Uterus (tissue), 4 donors: ENCODE measurements at regions of chr16 and their contacts with region 1.

Region 1: DNA sequence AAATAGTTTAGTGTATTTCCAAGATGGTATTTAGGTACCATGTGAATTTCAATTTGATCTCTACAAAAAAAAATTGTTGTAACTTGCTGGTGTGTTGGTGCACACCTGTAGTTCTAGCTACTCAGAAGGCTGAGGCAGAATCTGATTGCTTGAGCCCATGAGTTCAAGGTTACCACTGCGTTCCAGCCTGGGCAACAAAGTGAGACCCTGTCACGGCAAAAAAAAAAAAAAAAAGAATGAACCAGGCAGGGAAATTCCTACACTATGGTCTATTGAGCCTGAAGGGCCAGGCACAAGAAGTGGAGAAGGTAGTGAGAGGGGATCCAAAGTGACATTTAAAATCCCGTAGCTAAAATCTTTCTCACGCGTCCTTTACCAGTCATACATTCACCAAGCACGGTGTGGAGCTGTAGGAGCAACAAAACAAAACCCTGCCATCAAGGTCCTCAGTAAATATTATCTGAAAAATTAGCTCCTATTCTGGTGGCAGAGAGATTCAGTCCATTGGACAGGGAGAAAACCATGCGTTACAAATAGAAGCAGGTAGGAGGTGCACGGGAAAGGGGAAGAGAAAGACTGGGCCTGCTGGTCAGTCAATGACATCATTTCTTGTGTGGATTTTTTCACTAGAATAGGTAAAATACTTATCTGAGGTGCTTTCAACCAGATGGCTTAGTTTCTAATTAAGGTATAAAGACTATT is 27.3 kb downstream of the TXNDC11 start:
- DNase-seq: no peak
- H3K4me3 ChIP-seq: no peak overlapping the region
- H3K27ac ChIP-seq: peak overlapping the region in 1 of 2 donors; percentile 43
- H3K4me1 ChIP-seq: no peaks in the 10 kb centered on the region
- H3K27me3 ChIP-seq: no peaks in the 10 kb centered on the region
- CTCF ChIP-seq: no peak
- POLR2A ChIP-seq: no peak

Region 2: DNA sequence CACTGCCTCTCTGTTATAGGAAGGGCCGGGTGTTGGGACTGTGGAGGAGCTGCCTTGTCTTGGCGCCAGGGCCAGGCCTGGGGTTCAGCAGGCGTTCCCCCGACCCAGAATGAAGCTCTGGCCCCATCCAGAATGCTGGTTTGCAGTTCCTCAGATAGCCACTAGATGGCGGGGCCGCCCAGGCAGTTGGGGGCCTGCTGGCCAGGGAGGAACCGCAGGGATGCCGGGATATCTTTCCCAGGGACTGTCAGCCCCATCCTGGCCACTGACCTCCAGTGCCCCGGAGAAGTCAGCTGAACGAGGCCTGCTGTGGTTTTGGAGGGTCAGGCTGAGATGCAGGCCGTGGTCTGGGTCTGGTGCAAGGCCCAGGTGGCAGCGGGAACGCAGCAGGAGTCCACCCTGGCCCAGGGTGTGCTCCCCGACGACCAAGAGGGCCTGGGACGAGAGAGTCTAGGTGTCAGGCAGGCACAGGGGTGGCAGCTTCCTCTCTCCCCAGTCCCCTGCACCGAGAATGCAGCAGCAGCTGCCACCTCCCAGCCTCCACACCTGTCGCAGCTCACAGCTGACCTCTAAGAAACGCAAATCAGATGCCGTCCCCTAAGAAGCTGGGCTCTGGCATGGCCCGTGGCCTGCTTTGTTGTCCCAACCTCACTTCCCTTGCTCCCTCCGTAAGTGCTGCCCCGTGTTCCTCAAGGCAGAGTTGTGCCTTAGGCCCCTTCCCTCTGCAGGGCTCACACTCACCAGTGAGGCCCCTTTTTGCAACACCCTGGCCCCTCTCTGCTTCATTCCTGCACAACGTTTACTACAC is 319.0 kb before region 1 on chr16:
- intact Hi-C with region 1: loop called (anchors 2 kb)
- DNase-seq: peak; percentile 76 to 80
- H3K4me3 ChIP-seq: no peak overlapping the region
- H3K27ac ChIP-seq: no peak overlapping the region
- H3K4me1 ChIP-seq: no peaks in the 10 kb centered on the region
- H3K27me3 ChIP-seq: no peaks in the 10 kb centered on the region
- CTCF ChIP-seq: peak; percentile 97 to 99 (median 98)
- POLR2A ChIP-seq: no peak

Region 3: DNA sequence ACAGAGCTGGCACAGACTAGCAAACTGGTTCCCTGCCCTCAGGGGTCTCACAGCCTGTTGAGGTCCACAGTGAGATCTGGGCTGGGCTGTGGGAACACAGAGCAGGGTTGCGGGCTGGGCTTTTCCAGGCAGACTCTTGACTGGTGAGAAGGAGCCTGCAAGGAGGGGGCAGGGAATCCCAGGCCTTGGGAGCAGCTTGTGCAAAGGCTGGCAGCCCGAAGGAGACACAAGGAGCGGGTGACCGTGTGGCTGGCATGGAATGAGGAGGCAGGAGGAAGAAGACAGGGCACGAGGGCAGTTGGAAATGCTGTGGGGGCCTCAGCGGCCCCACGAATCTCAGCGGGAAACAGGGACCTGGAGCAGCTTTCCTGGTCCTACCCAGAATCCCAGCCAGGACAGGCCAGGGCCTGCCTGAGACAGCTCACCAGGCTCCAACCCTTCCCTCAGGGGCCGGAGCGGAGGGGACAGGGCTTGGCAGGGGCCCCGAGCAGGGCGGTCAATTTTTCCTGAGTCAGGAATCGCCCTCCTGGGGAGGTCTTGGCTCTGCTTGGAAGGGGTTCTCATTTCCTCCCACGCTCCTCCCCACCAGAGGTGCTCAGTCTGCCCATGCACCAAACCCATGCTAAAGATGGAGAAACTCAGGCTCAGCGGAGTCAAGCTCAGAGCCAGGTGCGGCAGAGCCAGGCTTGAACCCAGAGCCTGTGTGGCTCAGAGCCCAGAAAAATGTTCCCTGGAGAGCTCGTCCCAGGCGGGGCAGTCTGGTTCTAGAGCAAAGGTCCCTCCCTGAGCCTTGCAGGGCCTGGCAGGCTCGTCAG is 56.3 kb before region 1 on chr16:
- intact Hi-C with region 1: loop called (anchors 10 kb)
- DNase-seq: no peak
- H3K4me3 ChIP-seq: no peak overlapping the region
- H3K27ac ChIP-seq: no peak overlapping the region
- H3K4me1 ChIP-seq: no peaks in the 10 kb centered on the region
- H3K27me3 ChIP-seq: no peaks in the 10 kb centered on the region
- CTCF ChIP-seq: no peak
- POLR2A ChIP-seq: no peak